ENCODE measurements at regions of chr17 and their contacts with region 1.

Region 1: GRCh38 chr17:75827252-75828115 is 16.7 kb downstream of the UNC13D start:
- DNase-seq: peak; percentile 64 to 79
- ATAC-seq: peak; percentile 59 to 80 (median 69)
- H3K4me3 ChIP-seq: peak overlapping the region in 9 of 10 donors; percentile 11 to 50 (median 41)
- H3K27ac ChIP-seq: peak overlapping the region; percentile 52 to 88 (median 82)
- H3K4me1 ChIP-seq: peaks cover 15 to 41% (median 27%) of the 10 kb centered on the region in 9 donors
- H3K27me3 ChIP-seq: no peaks in the 10 kb centered on the region
- CTCF ChIP-seq: peak; percentile 58 to 82 (median 71)

Region 2: DNA sequence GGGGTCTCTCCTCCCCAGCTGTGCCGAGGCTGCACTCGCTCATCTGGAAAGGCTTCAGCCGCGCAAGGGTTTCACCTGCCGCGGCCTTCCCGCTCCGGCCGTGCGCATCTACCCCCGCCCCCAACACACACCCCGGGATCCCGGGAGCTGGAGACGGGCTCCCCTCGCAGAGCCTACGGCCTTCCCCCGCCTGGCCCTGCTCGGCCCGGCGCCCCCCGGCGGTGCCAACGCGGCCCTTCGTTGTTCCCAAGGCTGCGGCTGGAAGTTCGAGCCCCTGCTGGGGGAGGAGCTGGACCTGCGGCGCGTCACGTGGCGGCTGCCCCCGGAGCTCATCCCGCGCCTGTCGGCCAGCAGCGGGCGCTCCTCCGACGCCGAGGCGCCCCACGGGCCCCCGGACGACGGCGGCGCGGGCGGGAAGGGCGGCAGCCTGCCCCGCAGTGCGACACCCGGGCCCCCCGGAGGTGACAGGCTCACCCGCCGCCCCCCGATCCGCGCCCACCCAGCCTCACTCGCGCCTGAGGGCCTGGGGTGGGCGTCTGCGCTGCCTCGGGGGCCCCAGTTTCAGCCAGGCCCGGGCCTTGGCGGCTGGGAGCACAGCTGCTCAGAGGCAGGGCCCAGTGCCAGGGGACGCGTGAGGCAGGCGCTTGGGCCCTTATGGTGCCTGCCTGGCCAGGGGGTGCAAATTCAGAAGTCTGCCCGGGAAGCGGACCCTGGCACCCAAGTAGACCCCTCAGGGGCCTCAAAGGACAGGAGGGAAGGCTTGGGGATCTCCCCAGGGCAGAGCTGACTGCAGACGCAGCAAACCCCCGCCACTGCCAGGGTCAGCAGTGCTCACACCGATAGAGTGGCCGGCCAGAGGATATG is 73.7 kb before region 1 on chr17:
- intact Hi-C with region 1: no loop called
- DNase-seq: peak; percentile 58 to 81
- ATAC-seq: peak; percentile 37 to 84 (median 54)
- H3K4me3 ChIP-seq: peak overlapping the region in 9 of 10 donors; percentile 35 to 58 (median 49)
- H3K27ac ChIP-seq: peak overlapping the region in 5 of 10 donors; percentile 30 to 78 (median 62)
- H3K4me1 ChIP-seq: peaks cover 7 to 25% (median 17%) of the 10 kb centered on the region in 9 donors
- H3K27me3 ChIP-seq: no peaks in the 10 kb centered on the region
- CTCF ChIP-seq: peak; percentile 38 to 81 (median 63)

Region 3: GRCh38 chr17:75764711-75765421 is 62.6 kb before region 1 on chr17 and contains the start of gene GALK1:
- intact Hi-C with region 1: loop called in 2 of 10 experiments (anchors 5 to 10 kb)
- DNase-seq: peak; percentile 73 to 84
- ATAC-seq: peak; percentile 87 to 94 (median 90)
- H3K4me3 ChIP-seq: peak within 1 kb of the TSS; percentile 33 to 77 (median 71)
- H3K27ac ChIP-seq: peak within 1 kb of the TSS; percentile 81 to 92 (median 85)
- H3K4me1 ChIP-seq: peaks cover 5 to 22% (median 18%) of the 10 kb centered on the region in 9 donors
- H3K27me3 ChIP-seq: no peaks in the 10 kb centered on the region
- CTCF ChIP-seq: peak; percentile 41 to 83 (median 65)
- total RNA-seq, gene GALK1: 5.2 to 26.4 (median 11.3) TPM

Region 4: DNA sequence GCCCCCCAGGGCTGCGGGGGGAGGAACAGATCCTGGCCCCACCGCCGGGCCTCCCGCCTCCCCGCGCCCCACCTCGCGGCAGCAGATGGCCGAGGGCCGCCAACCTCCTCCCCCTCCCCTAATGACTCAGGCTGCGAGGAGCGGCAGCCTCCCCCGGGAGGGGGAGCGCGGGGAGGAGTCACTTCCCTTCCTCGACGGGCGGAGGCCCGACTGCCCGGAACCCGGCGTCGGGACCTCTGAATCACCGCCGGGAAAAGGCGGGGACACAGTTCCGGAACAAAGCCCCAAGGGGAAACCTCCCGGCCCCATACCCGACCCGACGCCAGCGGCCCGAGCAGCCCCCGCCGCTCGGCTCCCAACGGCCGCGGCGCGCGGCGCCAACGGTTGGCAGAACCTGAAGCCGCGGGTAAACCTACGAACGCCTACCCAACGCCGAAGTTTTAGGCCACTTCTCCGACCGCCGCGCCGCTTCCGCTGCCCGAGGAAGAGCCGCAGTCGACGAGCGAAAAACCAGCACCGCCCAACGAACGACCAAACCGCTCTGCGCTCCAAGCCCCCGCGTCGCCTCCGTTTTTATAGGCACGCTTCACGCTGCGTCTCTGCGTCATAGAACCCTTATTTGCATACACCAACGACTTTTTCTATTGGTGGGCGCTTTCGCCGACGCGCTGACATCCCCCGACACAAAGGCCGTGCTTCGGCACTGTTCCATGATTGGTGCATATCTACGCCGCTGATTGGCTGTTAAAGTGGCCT is 48.1 kb before region 1 on chr17:
- intact Hi-C with region 1: loop called in 1 of 10 experiments (anchors 10 kb)
- DNase-seq: peak; percentile 94 to 98
- ATAC-seq: peak; percentile 82 to 87 (median 86)
- H3K4me3 ChIP-seq: peak overlapping the region; percentile 78 to 94 (median 88)
- H3K27ac ChIP-seq: peak overlapping the region; percentile 92 to 99 (median 99)
- H3K4me1 ChIP-seq: peaks cover 9 to 68% (median 52%) of the 10 kb centered on the region in 9 donors
- H3K27me3 ChIP-seq: no peaks in the 10 kb centered on the region
- CTCF ChIP-seq: no peak

Region 5: GRCh38 chr17:75784473-75785015 is 42.9 kb before region 1 on chr17 and contains the start of gene UNK:
- intact Hi-C with region 1: loop called in 2 of 10 experiments (anchors 5 to 10 kb)
- DNase-seq: peak; percentile 94 to 99
- ATAC-seq: peak; percentile 91 to 95 (median 93)
- H3K4me3 ChIP-seq: peak within 1 kb of the TSS; percentile 51 to 78 (median 70)
- H3K27ac ChIP-seq: peak within 1 kb of the TSS; percentile 97 to 100 (median 99)
- H3K4me1 ChIP-seq: peaks cover 7 to 73% (median 39%) of the 10 kb centered on the region in 9 donors
- H3K27me3 ChIP-seq: no peaks in the 10 kb centered on the region
- CTCF ChIP-seq: no peak
- total RNA-seq, gene UNK: 11.6 to 19.1 (median 14.7) TPM

Region 6: DNA sequence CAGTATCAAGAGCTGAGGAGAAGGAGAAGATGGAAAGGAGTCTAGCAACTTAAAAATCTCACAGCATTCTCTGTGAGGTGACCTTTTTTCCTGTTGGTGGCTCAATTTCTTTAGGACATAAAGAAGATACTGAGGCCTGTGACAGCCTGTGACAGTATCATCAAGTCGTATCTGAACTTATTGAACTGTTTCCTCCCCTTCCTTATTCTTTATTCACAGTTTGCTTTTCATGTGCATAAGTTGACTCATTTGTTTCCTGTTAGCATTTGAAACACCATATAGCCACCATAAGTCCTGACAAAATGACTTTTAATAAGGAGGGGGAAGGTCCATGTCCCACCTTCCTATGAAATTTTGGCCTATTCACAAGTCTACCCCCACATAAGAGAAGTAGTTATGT is 34.0 kb before region 1 on chr17:
- intact Hi-C with region 1: loop called in 2 of 10 experiments (anchors 5 kb)
- DNase-seq: no peak
- ATAC-seq: no peak
- H3K4me3 ChIP-seq: no peak overlapping the region
- H3K27ac ChIP-seq: no peak overlapping the region
- H3K4me1 ChIP-seq: peaks cover 0 to 26% (median 0%) of the 10 kb centered on the region in 9 donors
- H3K27me3 ChIP-seq: no peaks in the 10 kb centered on the region
- CTCF ChIP-seq: no peak